Naive thymus-derived CD4-positive, alpha-beta T cell (primary cell): ENCODE measurements at regions of chr5 and their contacts with region 1.

Region 1: DNA sequence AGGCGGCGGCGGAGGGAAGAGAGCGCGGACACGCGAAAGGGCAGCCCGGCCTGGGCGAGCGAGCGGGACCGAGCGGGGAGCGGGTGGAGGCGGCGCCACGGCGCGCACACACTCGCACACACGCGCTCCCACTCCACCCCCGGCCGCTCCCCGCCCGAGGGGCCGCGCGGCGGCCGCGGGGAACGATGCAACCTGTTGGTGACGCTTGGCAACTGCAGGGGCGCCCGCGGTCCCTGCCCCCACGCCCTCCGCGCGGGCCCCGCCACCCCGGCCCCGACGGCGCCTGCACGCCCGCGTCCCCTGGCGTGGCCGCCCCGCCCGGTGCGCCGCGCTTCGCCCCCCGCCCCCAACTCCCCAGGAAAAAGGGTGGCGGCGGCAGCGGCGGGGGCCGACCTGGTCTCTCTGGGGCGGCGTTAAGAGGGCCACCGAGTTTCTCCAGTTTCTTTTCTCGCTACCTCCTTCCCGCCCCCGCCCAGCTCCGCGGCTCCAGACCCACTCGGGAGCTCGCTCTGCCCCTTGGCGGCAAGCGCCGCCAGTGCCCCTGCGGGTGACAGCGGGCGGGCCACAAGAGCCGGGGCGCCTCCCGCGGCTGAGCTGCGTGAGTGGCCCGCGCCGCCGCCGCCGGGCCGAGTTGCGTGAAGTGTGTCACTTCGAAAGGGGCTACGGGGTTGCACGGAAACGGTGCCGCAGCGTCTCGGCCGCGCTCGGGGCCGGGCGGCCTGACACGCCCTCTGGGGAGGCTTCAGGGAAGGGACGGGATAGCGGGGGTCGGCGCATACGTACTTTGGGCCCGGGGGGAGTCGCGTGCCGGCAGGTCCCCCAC is at the start of gene NR3C1:
- DNase-seq: peak; percentile 83 to 92 (median 90)
- ATAC-seq: peak; percentile 85
- H3K4me3 ChIP-seq: peak within 1 kb of the TSS; percentile 98
- H3K4me3 Mint-ChIP-seq: peak within 1 kb of the TSS; percentile 93 to 99 (median 96)
- H3K27ac ChIP-seq: peak within 1 kb of the TSS; percentile 91
- H3K27ac Mint-ChIP-seq: peak within 1 kb of the TSS; percentile 98 to 100 (median 99)
- H3K4me1 ChIP-seq: peaks cover 17 to 29% of the 10 kb centered on the region in 2 donors
- H3K4me1 Mint-ChIP-seq: peaks cover 30 to 48% (median 40%) of the 10 kb centered on the region in 7 donors
- H3K27me3 ChIP-seq: no peaks in the 10 kb centered on the region
- H3K27me3 Mint-ChIP-seq: peaks cover 0 to 2% (median 0%) of the 10 kb centered on the region in 5 donors
- total RNA-seq, gene NR3C1: 68.0 to 140 (median 121) TPM

Region 2: DNA sequence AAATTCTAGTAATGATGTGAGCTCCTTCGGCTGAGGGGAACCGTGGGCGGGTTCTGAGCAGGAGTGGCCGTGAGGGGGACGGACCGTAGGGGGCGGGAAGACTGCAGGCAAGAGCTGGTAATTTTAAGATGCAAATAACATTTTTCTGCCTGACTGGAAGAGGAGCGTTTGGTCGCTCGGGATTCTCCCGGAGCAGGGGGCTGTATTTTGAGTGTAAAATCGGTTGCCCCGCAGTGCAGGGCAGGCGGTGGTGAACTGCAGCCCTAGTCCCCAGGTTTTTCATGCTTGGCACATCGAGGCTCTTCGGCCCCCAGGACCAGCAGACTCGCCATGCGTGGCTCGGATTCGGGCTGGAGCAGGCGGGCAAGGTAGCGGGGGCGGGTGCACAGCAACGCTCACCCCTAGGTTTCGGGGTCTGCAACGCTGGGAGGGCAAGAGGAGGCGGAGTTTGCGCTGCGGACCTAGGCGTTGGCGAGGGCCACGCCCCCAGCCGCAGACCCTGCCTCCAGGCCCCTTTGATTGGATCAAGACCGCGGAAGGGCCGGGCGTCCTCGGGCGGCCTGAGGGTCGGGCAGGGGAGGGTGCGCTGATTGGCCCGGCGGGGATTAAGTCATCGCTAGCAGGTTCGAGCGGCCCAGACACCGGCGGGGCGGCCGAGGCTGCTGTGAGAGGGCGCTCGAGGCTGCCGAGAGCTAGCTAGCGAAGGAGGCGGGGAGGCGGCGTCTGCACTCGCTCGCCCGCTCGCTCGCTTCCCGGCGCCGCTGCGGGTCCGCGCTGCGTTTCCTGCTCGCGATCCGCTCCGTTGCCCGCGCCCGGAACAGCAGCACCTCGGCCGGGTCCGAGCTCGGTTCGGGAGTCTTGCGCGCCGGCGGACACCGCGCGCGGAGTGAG is 633.8 kb before region 1 on chr5 and contains the start of gene ARHGAP26:
- CTCF ChIA-PET with region 1: no interaction called
- POLR2A ChIA-PET with region 1: interaction called, 3 read pairs
- intact Hi-C with region 1: loop called (anchors 1 kb)
- DNase-seq: peak; percentile 82 to 93 (median 87)
- ATAC-seq: peak; percentile 94
- H3K4me3 ChIP-seq: peak within 1 kb of the TSS; percentile 86
- H3K4me3 Mint-ChIP-seq: peak within 1 kb of the TSS; percentile 87 to 100 (median 96)
- H3K27ac ChIP-seq: peak within 1 kb of the TSS; percentile 77
- H3K27ac Mint-ChIP-seq: peak within 1 kb of the TSS; percentile 89 to 98 (median 92)
- H3K4me1 ChIP-seq: peaks cover 9 to 15% of the 10 kb centered on the region in 2 donors
- H3K4me1 Mint-ChIP-seq: peaks cover 30 to 39% (median 35%) of the 10 kb centered on the region in 7 donors
- H3K27me3 ChIP-seq: no peaks in the 10 kb centered on the region
- H3K27me3 Mint-ChIP-seq: peaks cover 0 to 3% (median 0%) of the 10 kb centered on the region in 5 donors
- total RNA-seq, gene ARHGAP26: 20.1 to 123 (median 29.1) TPM

Region 3: GRCh38 chr5:143030349-143030748 is 373.5 kb before region 1 on chr5:
- CTCF ChIA-PET with region 1: no interaction called
- POLR2A ChIA-PET with region 1: no interaction called
- intact Hi-C with region 1: loop called in 1 of 2 experiments (anchors 1 kb)
- DNase-seq: peak in 6 of 9 donors; percentile 11 to 44 (median 31)
- ATAC-seq: peak; percentile 67
- H3K4me3 ChIP-seq: peak overlapping the region; percentile 2
- H3K4me3 Mint-ChIP-seq: peak overlapping the region; percentile 8 to 74 (median 62)
- H3K27ac ChIP-seq: no peak overlapping the region
- H3K27ac Mint-ChIP-seq: peak overlapping the region in 3 of 9 donors; percentile 21 to 54 (median 32)
- H3K4me1 ChIP-seq: peaks cover 17 to 24% of the 10 kb centered on the region in 2 donors
- H3K4me1 Mint-ChIP-seq: peaks cover 25 to 44% (median 32%) of the 10 kb centered on the region in 7 donors
- H3K27me3 ChIP-seq: no peaks in the 10 kb centered on the region
- H3K27me3 Mint-ChIP-seq: no peaks in the 10 kb centered on the region

Region 4: GRCh38 chr5:143302341-143302740 is 101.5 kb before region 1 on chr5:
- CTCF ChIA-PET with region 1: no interaction called
- POLR2A ChIA-PET with region 1: no interaction called
- intact Hi-C with region 1: loop called (anchors 2 to 5 kb)
- DNase-seq: no peak
- ATAC-seq: no peak
- H3K4me3 ChIP-seq: no peak overlapping the region
- H3K4me3 Mint-ChIP-seq: no peak overlapping the region
- H3K27ac ChIP-seq: no peak overlapping the region
- H3K27ac Mint-ChIP-seq: peak overlapping the region in 2 of 9 donors; percentile 23 to 27
- H3K4me1 ChIP-seq: peaks cover 0 to 3% of the 10 kb centered on the region in 2 donors
- H3K4me1 Mint-ChIP-seq: peaks cover 9 to 35% (median 28%) of the 10 kb centered on the region in 7 donors
- H3K27me3 ChIP-seq: no peaks in the 10 kb centered on the region
- H3K27me3 Mint-ChIP-seq: no peaks in the 10 kb centered on the region

Region 5: GRCh38 chr5:143435210-143435657 is 31.4 kb after region 1 on chr5:
- CTCF ChIA-PET with region 1: interaction called, 16 read pairs
- POLR2A ChIA-PET with region 1: interaction called, 178 read pairs
- intact Hi-C with region 1: loop called (anchors 1 kb)
- DNase-seq: peak in 8 of 9 donors; percentile 25 to 63 (median 56)
- ATAC-seq: peak; percentile 79
- H3K4me3 ChIP-seq: peak overlapping the region; percentile 70
- H3K4me3 Mint-ChIP-seq: peak overlapping the region; percentile 93 to 99 (median 96)
- H3K27ac ChIP-seq: peak overlapping the region; percentile 81
- H3K27ac Mint-ChIP-seq: peak overlapping the region; percentile 91 to 100 (median 98)
- H3K4me1 ChIP-seq: peaks cover 20 to 27% of the 10 kb centered on the region in 2 donors
- H3K4me1 Mint-ChIP-seq: peaks cover 35 to 70% (median 66%) of the 10 kb centered on the region in 7 donors
- H3K27me3 ChIP-seq: no peaks in the 10 kb centered on the region
- H3K27me3 Mint-ChIP-seq: no peaks in the 10 kb centered on the region

Region 6: GRCh38 chr5:144170276-144171024 is 766.6 kb after region 1 on chr5 and contains the starts of genes KCTD16 and YIPF5:
- CTCF ChIA-PET with region 1: interaction called, 3 read pairs
- POLR2A ChIA-PET with region 1: interaction called, 11 read pairs
- intact Hi-C with region 1: loop called (anchors 1 kb)
- DNase-seq: peak; percentile 90 to 98 (median 98)
- ATAC-seq: peak; percentile 98
- H3K4me3 ChIP-seq: peak within 1 kb of the TSS; percentile 79
- H3K4me3 Mint-ChIP-seq: peak within 1 kb of the TSS; percentile 90 to 99 (median 94)
- H3K27ac ChIP-seq: peak within 1 kb of the TSS; percentile 91
- H3K27ac Mint-ChIP-seq: peak within 1 kb of the TSS; percentile 85 to 96 (median 95)
- H3K4me1 ChIP-seq: peaks cover 15 to 19% of the 10 kb centered on the region in 2 donors
- H3K4me1 Mint-ChIP-seq: peaks cover 19 to 56% (median 52%) of the 10 kb centered on the region in 7 donors
- H3K27me3 ChIP-seq: no peaks in the 10 kb centered on the region
- H3K27me3 Mint-ChIP-seq: peaks cover 0 to 29% (median 0%) of the 10 kb centered on the region in 5 donors
- total RNA-seq, gene KCTD16: 0.07 to 0.22 TPM in 2 of 5 experiments, not detected in the others
- total RNA-seq, gene YIPF5: 27.0 to 49.2 (median 38.6) TPM